ENCODE measurements at regions of chr19 and their contacts with region 1.

Region 1: GRCh38 chr19:703651-704446 is 4.9 kb upstream of the PALM start:
- DNase-seq: peak; percentile 98
- ATAC-seq: peak; percentile 93
- H3K4me3 Mint-ChIP-seq: peak overlapping the region; percentile 69
- H3K27ac Mint-ChIP-seq: no peak overlapping the region
- H3K4me1 Mint-ChIP-seq: peaks cover 10% of the 10 kb centered on the region; the same call in 1 of the 2 replicates
- H3K27me3 Mint-ChIP-seq: peaks cover 22% of the 10 kb centered on the region
- CTCF ChIP-seq: no peak

Region 2: DNA sequence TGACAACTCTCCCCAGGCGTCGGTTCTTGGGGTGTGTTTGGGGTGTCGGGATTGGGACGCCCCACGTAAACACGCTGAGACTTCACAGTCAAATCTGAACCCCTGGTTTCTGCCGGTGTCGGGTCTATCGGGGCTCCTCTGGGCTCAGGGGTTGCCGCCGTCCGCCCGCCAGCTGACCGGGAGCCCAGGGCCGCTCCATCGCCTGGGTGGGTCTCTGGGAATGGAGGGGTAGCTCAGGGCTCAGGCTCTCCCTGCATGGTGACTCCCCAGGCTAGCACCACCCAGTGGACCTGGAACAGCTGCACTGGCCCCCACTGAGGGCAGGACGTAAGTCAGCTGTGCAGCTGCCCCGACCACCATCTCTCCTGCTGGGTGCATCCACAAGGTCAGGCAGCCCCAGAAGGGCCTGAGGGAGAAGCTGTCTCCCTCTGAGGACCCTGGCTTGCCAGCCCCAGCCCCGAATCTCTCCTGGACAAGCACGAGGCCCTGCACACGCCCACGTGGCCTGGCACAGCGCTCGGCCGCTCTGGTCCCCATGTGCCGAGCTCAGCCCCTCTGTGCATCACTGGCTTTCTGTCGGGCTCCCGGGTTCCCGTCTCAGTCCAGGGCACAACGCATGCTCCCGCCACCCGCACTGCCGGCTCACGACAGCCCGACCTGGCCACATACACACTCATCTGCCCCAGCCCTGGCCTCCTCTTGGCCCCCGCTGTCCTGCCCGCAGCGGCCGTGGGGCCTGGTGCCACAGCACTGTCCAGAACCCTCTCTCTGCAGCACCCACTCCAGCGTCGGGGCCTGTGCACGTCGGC is 46.9 kb before region 1 on chr19:
- CTCF ChIA-PET with region 1: no interaction called
- POLR2A ChIA-PET with region 1: no interaction called
- DNase-seq: no peak
- ATAC-seq: no peak
- H3K4me3 Mint-ChIP-seq: no peak overlapping the region
- H3K27ac Mint-ChIP-seq: no peak overlapping the region
- H3K4me1 Mint-ChIP-seq: peaks cover 16% of the 10 kb centered on the region
- H3K27me3 Mint-ChIP-seq: no peaks in the 10 kb centered on the region
- CTCF ChIP-seq: no peak

Region 3: GRCh38 chr19:670609-671075 is 33.2 kb before region 1 on chr19:
- CTCF ChIA-PET with region 1: interaction called, 12 read pairs
- POLR2A ChIA-PET with region 1: no interaction called
- DNase-seq: peak; percentile 54
- ATAC-seq: peak; percentile 86
- H3K4me3 Mint-ChIP-seq: no peak overlapping the region
- H3K27ac Mint-ChIP-seq: no peak overlapping the region
- H3K4me1 Mint-ChIP-seq: no peaks in the 10 kb centered on the region
- H3K27me3 Mint-ChIP-seq: peaks cover 31% of the 10 kb centered on the region
- CTCF ChIP-seq: 0 out of 2 replicates have a peak, but pooled peaks have one; percentile 12

Region 4: DNA sequence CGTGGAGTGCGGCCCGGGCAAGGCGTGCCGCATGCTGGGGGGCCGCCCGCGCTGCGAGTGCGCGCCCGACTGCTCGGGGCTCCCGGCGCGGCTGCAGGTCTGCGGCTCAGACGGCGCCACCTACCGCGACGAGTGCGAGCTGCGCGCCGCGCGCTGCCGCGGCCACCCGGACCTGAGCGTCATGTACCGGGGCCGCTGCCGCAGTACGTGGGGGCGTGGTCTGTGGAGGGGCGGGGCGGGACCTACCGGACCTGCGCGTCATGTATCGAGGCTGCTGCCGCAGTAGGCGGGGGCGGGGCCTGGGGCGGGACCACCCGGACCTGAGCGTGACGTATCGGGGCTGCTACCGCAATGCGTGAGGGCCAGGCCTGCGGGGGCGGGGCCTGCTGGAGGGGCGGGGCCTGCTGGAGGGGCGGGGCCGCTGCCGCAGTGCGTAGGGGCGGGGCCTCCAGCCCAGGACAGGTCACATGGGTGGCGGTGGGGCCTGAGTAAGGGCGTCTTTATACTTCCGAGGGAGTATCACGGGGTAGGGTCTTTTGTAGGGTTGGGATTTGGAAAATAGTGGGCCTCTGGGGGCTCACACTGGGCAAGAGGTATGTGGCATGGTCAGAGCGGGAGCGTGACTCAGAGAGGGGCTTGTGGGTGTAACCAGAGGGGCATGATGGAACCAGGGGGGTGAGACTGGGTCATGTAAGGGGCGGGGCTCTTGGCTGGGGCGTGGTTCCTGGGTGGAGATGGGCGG is 23.4 kb before region 1 on chr19:
- CTCF ChIA-PET with region 1: interaction called, 17 read pairs
- POLR2A ChIA-PET with region 1: interaction called, 8 read pairs
- DNase-seq: peak; percentile 100
- ATAC-seq: peak; percentile 71
- H3K4me3 Mint-ChIP-seq: peak overlapping the region; percentile 87
- H3K27ac Mint-ChIP-seq: peak overlapping the region; percentile 100
- H3K4me1 Mint-ChIP-seq: no peaks in the 10 kb centered on the region
- H3K27me3 Mint-ChIP-seq: peaks cover 18% of the 10 kb centered on the region
- CTCF ChIP-seq: no peak

Region 5: GRCh38 chr19:732148-733069 is 28.6 kb after region 1 on chr19:
- CTCF ChIA-PET with region 1: interaction called, 21 read pairs
- POLR2A ChIA-PET with region 1: no interaction called
- DNase-seq: no peak
- ATAC-seq: no peak
- H3K4me3 Mint-ChIP-seq: no peak overlapping the region
- H3K27ac Mint-ChIP-seq: no peak overlapping the region
- H3K4me1 Mint-ChIP-seq: no peaks in the 10 kb centered on the region
- H3K27me3 Mint-ChIP-seq: no peaks in the 10 kb centered on the region
- CTCF ChIP-seq: no peak

Region 6: DNA sequence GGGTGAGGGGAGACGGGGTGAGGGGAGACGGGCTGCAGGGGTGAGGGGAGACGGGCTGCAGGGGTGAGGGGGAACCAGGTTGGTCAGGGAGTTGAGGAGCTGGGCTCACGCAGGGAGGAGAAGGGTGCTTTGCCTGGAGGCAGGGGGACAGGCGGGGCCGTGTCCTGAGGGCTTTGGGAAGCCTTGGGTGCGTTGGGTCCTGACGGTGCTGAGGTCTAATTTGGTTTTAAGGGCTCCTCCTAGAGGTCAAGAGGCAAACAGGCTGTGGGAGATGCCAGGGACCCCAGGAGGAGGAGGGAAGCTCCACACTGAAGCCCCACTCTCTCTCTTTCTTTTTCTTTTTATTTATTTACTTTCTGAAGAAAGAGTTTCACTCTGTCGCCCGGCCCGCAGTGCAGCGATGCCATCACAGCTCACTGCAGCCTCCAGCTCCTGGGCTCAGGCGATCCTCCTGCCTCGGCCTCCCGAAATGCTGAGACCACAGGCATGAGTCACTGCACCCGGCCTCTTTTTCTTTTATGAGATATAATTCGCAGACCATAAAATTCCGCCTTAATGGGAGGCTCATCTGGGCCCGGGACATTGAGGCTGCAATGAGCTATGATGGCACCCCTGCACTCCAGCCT is 37.8 kb after region 1 on chr19:
- CTCF ChIA-PET with region 1: interaction called, 11 read pairs
- POLR2A ChIA-PET with region 1: interaction called, 4 read pairs
- DNase-seq: peak; percentile 68
- ATAC-seq: peak; percentile 68
- H3K4me3 Mint-ChIP-seq: no peak overlapping the region
- H3K27ac Mint-ChIP-seq: no peak overlapping the region
- H3K4me1 Mint-ChIP-seq: no peaks in the 10 kb centered on the region
- H3K27me3 Mint-ChIP-seq: no peaks in the 10 kb centered on the region
- CTCF ChIP-seq: no peak

Region 7: DNA sequence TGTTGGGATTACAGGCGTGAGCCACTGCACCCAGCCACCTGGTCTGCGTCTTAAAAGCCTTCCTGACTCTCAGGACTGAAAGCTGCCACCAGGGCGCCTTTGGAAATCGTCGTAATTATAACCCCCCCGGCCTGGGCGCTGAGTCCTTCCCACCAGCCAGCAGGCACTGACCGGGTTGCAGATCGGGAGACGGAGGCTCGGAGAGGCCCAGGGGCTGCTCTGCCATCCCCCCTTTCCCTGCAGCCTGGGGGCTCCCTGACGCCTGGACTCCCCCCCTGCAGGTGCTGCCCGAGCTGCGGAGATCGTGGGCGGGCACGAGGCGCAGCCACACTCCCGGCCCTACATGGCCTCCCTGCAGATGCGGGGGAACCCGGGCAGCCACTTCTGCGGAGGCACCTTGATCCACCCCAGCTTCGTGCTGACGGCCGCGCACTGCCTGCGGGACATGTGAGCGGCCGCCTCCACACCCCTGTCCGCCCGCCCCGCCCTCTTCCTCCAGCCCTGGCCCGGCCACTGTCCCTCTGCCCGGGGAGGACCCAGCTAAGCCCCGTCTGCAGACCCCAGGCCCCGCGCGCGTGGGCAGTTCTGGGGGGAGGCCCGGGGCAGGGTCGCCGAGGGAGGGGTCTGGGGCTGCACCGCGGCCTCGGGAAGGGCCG is 139.5 kb after region 1 on chr19:
- CTCF ChIA-PET with region 1: no interaction called
- POLR2A ChIA-PET with region 1: no interaction called
- DNase-seq: peak; percentile 62
- ATAC-seq: peak; percentile 70
- H3K4me3 Mint-ChIP-seq: peak overlapping the region; percentile 41; the same call in 1 of the 2 replicates
- H3K27ac Mint-ChIP-seq: no peak overlapping the region
- H3K4me1 Mint-ChIP-seq: no peaks in the 10 kb centered on the region
- H3K27me3 Mint-ChIP-seq: peaks cover 42% of the 10 kb centered on the region
- CTCF ChIP-seq: no peak

Measured in WTC11 (cell line).